Naive thymus-derived CD4-positive, alpha-beta T cell (primary cell): ENCODE measurements at regions of chr12 and their contacts with region 1.

Region 1: DNA sequence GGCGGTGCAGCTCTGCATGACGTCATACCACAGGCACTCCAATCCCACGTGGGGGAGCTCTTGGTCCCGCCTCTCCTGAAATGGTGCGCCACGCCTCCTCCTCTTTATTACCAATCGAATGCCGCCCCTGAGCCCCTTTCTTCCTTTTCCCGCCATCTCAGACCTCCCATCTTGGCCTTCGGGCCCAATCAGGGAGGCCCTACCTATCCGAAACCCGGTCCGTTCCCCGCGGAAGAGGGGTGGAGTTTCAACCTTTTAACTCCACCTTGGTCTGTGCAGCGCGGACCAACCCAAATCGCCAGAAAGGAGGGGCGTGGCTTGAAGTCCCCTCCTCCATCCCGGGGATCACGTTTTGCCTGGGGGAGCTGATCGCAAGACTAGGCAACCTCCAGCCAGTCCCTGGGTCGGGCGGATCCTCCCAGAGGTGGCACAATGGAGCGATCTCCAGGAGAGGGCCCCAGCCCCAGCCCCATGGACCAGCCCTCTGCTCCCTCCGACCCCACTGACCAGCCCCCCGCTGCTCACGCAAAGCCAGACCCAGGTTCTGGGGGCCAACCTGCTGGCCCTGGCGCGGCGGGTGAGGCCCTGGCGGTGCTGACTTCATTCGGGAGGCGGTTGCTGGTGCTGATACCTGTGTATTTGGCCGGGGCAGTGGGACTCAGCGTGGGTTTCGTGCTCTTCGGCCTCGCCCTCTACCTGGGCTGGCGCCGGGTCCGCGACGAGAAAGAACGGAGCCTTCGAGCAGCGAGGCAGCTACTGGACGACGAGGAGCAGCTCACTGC is at the start of gene ESYT1:
- DNase-seq: peak; percentile 75 to 100 (median 98)
- ATAC-seq: peak; percentile 94
- H3K4me3 ChIP-seq: peak within 1 kb of the TSS; percentile 77
- H3K4me3 Mint-ChIP-seq: peak within 1 kb of the TSS; percentile 95 to 100 (median 98)
- H3K27ac ChIP-seq: peak within 1 kb of the TSS; percentile 84
- H3K27ac Mint-ChIP-seq: peak within 1 kb of the TSS; percentile 86 to 99 (median 91)
- H3K4me1 ChIP-seq: peaks cover 39 to 54% of the 10 kb centered on the region in 2 donors
- H3K4me1 Mint-ChIP-seq: peaks cover 40 to 76% (median 65%) of the 10 kb centered on the region in 7 donors
- H3K27me3 ChIP-seq: no peaks in the 10 kb centered on the region
- H3K27me3 Mint-ChIP-seq: no peaks in the 10 kb centered on the region
- total RNA-seq, gene ESYT1: 121 to 300 (median 221) TPM

Region 2: DNA sequence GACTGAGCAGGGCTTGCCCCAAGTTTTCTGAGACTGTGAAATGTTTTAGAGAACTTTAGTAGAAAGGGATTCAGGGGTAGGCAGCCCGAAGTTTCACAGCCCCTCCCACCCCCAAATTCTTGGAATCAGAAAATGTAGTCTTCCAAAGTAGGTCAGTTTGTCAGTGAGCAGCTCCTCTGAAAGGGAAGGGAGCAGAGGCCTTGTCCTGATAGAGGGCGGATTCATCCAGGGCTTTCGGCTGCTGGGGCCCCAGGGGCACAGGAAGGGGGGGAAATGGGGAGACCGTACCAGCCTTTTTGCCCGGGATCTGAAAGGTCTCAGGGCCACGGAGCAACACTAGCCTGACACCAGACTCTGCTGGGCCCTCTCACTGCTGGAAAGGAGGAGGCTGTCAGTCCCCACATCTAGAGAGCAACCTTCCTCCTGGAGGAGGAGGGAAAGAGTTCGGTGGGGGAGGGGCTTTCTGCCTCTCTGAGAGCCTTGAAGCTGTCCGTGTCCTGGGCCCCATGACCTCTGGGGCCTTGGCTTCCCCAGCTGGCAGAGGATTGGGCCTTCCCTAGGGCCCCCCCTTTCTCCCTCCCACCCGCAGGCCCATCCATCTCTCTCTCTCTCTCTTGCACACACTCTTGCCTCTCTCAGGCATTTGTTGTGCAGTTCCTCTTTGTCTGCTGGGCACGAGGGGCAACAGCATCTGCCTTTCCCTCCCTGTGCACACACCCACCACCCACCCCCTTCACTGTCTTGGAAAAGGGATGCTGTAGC is 107.5 kb before region 1 on chr12 and contains the start of gene IKZF4:
- CTCF ChIA-PET with region 1: no interaction called
- POLR2A ChIA-PET with region 1: no interaction called
- intact Hi-C with region 1: no loop called
- DNase-seq: peak in 1 of 9 donors; percentile 36
- ATAC-seq: peak; percentile 55
- H3K4me3 ChIP-seq: peak within 1 kb of the TSS; percentile 41
- H3K4me3 Mint-ChIP-seq: peak within 1 kb of the TSS; percentile 80 to 97 (median 88)
- H3K27ac ChIP-seq: peak within 1 kb of the TSS; percentile 62
- H3K27ac Mint-ChIP-seq: peak within 1 kb of the TSS; percentile 73 to 97 (median 93)
- H3K4me1 ChIP-seq: peaks cover 0 to 16% of the 10 kb centered on the region in 2 donors
- H3K4me1 Mint-ChIP-seq: peaks cover 7 to 58% (median 24%) of the 10 kb centered on the region in 7 donors
- H3K27me3 ChIP-seq: no peaks in the 10 kb centered on the region
- H3K27me3 Mint-ChIP-seq: no peaks in the 10 kb centered on the region
- total RNA-seq, gene IKZF4: 3.6 to 37.8 (median 5.3) TPM

Region 3: DNA sequence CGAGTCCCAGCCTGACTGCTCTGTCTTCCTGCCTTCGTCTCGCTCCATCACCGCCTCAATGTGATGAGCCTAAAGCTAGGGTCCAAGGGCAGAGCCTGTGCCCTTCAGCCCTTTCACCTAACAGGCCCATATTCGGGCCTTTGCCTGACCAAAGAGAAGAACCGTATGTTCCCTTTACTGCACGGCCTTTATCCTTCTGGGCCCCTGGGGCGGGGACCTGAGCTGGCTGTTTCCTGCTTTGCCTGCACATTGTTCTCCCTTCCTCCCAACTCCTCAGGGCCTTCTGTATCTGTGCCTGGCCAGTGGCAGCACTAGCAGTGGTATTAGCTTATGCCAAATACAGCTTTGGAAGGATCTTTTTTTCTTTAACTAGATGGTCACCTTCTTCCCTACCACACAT is 15.8 kb after region 1 on chr12:
- CTCF ChIA-PET with region 1: interaction called, 37 read pairs
- POLR2A ChIA-PET with region 1: interaction called, 18 read pairs
- intact Hi-C with region 1: no loop called
- DNase-seq: no peak
- ATAC-seq: no peak
- H3K4me3 ChIP-seq: no peak overlapping the region
- H3K4me3 Mint-ChIP-seq: peak overlapping the region in 1 of 10 donors; percentile 7
- H3K27ac ChIP-seq: no peak overlapping the region
- H3K27ac Mint-ChIP-seq: peak overlapping the region in 8 of 9 donors; percentile 33 to 86 (median 79)
- H3K4me1 ChIP-seq: peaks cover 8 to 16% of the 10 kb centered on the region in 2 donors
- H3K4me1 Mint-ChIP-seq: peaks cover 30 to 44% (median 37%) of the 10 kb centered on the region in 7 donors
- H3K27me3 ChIP-seq: no peaks in the 10 kb centered on the region
- H3K27me3 Mint-ChIP-seq: no peaks in the 10 kb centered on the region

Region 4: GRCh38 chr12:56152318-56153033 is 24.4 kb after region 1 on chr12 and contains the start of gene MYL6B:
- CTCF ChIA-PET with region 1: interaction called, 7 read pairs
- POLR2A ChIA-PET with region 1: interaction called, 161 read pairs
- intact Hi-C with region 1: loop called (anchors 1 kb)
- DNase-seq: peak; percentile 79 to 94 (median 87)
- ATAC-seq: peak; percentile 98
- H3K4me3 ChIP-seq: peak within 1 kb of the TSS; percentile 86
- H3K4me3 Mint-ChIP-seq: peak within 1 kb of the TSS; percentile 80 to 96 (median 92)
- H3K27ac ChIP-seq: peak within 1 kb of the TSS; percentile 80
- H3K27ac Mint-ChIP-seq: peak within 1 kb of the TSS; percentile 84 to 99 (median 97)
- H3K4me1 ChIP-seq: peaks cover 22 to 25% of the 10 kb centered on the region in 2 donors
- H3K4me1 Mint-ChIP-seq: peaks cover 17 to 55% (median 39%) of the 10 kb centered on the region in 7 donors
- H3K27me3 ChIP-seq: no peaks in the 10 kb centered on the region
- H3K27me3 Mint-ChIP-seq: no peaks in the 10 kb centered on the region
- total RNA-seq, gene MYL6B: 3.7 to 60.3 (median 8.9) TPM

Region 5: DNA sequence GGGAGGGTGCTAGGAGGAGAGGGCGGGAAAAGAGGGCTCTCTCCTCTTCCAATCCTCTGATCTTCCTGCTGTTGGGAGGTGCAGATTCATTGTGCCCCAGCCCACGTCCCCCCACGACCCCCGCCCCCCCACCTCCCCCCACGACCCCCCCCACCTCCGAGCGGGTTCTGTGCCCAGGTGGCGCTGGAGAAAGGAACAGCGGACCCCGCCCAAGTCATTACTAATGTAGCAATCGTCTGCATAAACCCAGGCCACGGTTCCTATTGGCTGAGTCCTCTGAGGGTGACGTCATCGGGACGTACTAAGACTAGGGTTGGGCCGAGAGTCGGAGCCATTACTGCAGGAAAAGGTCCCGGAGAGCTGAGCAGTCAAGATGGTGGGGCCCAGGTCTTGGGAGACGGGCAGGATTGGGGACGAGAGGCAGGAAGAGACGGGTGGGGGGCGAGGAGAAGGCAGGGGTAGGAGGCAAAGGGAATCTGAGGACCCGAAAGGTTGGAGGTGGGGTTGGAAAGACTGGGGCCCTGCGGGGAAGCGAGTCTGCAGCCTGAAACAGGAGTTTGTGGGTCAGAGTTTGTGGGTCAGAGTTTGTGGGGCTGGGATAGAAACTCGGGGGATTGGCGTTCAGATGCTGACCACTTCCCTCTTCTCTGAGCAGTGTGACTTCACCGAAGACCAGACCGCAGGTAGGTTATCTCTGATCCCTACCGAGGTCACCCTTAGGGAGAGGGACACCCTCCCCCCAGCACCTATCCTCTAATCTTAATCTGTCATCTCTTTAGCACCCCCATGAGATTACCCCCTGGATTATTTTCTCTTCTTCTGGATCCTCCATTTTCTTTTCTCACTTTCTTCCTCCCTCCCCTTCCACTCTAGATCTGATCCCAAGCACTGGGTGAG is 30.2 kb after region 1 on chr12 and contains the start of gene MYL6:
- CTCF ChIA-PET with region 1: interaction called, 15 read pairs
- POLR2A ChIA-PET with region 1: interaction called, 161 read pairs
- intact Hi-C with region 1: loop called (anchors 1 kb)
- DNase-seq: peak; percentile 58 to 97 (median 89)
- ATAC-seq: peak; percentile 91
- H3K4me3 ChIP-seq: peak within 1 kb of the TSS; percentile 89
- H3K4me3 Mint-ChIP-seq: peak within 1 kb of the TSS; percentile 94 to 99 (median 96)
- H3K27ac ChIP-seq: peak within 1 kb of the TSS; percentile 98
- H3K27ac Mint-ChIP-seq: peak within 1 kb of the TSS; percentile 88 to 99 (median 97)
- H3K4me1 ChIP-seq: peaks cover 24 to 26% of the 10 kb centered on the region in 2 donors
- H3K4me1 Mint-ChIP-seq: peaks cover 31 to 59% (median 54%) of the 10 kb centered on the region in 7 donors
- H3K27me3 ChIP-seq: no peaks in the 10 kb centered on the region
- H3K27me3 Mint-ChIP-seq: no peaks in the 10 kb centered on the region
- total RNA-seq, gene MYL6: 428 to 1,509 (median 467) TPM

Region 6: GRCh38 chr12:56420411-56420810 is 292.3 kb after region 1 on chr12:
- CTCF ChIA-PET with region 1: no interaction called
- POLR2A ChIA-PET with region 1: no interaction called
- intact Hi-C with region 1: no loop called
- DNase-seq: no peak
- ATAC-seq: no peak
- H3K4me3 ChIP-seq: no peak overlapping the region
- H3K4me3 Mint-ChIP-seq: no peak overlapping the region
- H3K27ac ChIP-seq: no peak overlapping the region
- H3K27ac Mint-ChIP-seq: no peak overlapping the region
- H3K4me1 ChIP-seq: peaks cover 0 to 10% of the 10 kb centered on the region in 2 donors
- H3K4me1 Mint-ChIP-seq: peaks cover 8 to 24% (median 14%) of the 10 kb centered on the region in 7 donors
- H3K27me3 ChIP-seq: no peaks in the 10 kb centered on the region
- H3K27me3 Mint-ChIP-seq: no peaks in the 10 kb centered on the region

Region 7: DNA sequence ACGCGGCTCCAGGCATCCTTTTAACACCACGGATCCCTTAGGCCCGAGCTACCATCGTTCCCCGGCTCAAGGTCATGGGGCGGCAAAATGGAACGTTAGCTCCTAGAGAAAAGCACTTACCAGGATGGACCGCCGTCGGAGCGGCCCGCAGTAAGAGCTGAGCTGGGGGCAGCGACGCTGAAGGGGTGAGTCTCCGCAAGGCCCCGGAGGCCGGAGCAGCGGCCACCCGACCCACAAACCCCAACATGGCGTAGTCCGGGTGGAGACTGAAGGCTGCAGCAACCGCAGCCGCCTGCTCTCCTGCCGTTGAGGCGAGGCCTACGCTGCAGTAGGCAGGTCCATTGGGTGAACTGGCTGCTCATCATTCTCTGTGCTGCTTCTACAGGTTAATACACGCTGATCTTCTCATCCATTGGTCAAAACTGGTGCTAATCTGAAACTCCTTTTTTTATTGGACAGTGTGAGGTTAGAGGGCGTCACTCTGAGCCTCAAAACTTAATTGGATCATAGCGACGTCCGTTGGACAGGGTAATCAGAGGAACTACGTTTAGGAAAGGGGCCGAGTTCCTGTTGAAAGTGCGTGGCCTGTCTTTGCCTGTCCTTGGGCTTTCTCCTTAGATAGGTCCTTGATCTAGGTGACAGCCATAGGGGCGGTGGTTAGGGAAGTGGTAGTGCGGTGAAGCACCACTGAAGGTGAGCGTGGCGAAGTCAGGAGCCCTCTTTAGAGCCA is 517.8 kb after region 1 on chr12 and contains the start of gene ATP5F1B:
- CTCF ChIA-PET with region 1: no interaction called
- POLR2A ChIA-PET with region 1: no interaction called
- intact Hi-C with region 1: no loop called
- DNase-seq: peak; percentile 65 to 97 (median 93)
- ATAC-seq: peak; percentile 97
- H3K4me3 ChIP-seq: peak within 1 kb of the TSS; percentile 83
- H3K4me3 Mint-ChIP-seq: peak within 1 kb of the TSS; percentile 82 to 98 (median 94)
- H3K27ac ChIP-seq: peak within 1 kb of the TSS; percentile 93
- H3K27ac Mint-ChIP-seq: peak within 1 kb of the TSS; percentile 97 to 100 (median 99)
- H3K4me1 ChIP-seq: peaks cover 4 to 21% of the 10 kb centered on the region in 2 donors
- H3K4me1 Mint-ChIP-seq: peaks cover 17 to 39% (median 34%) of the 10 kb centered on the region in 7 donors
- H3K27me3 ChIP-seq: no peaks in the 10 kb centered on the region
- H3K27me3 Mint-ChIP-seq: no peaks in the 10 kb centered on the region
- total RNA-seq, gene ATP5F1B: 217 to 476 (median 267) TPM

Region 8: GRCh38 chr12:56880125-56881075 is 752.3 kb after region 1 on chr12:
- CTCF ChIA-PET with region 1: no interaction called
- POLR2A ChIA-PET with region 1: no interaction called
- intact Hi-C with region 1: no loop called
- DNase-seq: no peak
- ATAC-seq: no peak
- H3K4me3 ChIP-seq: no peak overlapping the region
- H3K4me3 Mint-ChIP-seq: no peak overlapping the region
- H3K27ac ChIP-seq: no peak overlapping the region
- H3K27ac Mint-ChIP-seq: no peak overlapping the region
- H3K4me1 ChIP-seq: no peaks in the 10 kb centered on the region
- H3K4me1 Mint-ChIP-seq: no peaks in the 10 kb centered on the region
- H3K27me3 ChIP-seq: no peaks in the 10 kb centered on the region
- H3K27me3 Mint-ChIP-seq: peaks cover 3 to 30% (median 23%) of the 10 kb centered on the region in 5 donors